ENCODE measurements at regions of chr3 and their contacts with region 1.

Region 1: GRCh38 chr3:148943506-148944205 is 47.7 kb upstream of the GYG1 start:
- DNase-seq: peak; percentile 77
- H3K4me3 ChIP-seq: no peak overlapping the region
- H3K27me3 ChIP-seq: no peaks in the 10 kb centered on the region
- CTCF ChIP-seq: peak; percentile 62

Region 2: DNA sequence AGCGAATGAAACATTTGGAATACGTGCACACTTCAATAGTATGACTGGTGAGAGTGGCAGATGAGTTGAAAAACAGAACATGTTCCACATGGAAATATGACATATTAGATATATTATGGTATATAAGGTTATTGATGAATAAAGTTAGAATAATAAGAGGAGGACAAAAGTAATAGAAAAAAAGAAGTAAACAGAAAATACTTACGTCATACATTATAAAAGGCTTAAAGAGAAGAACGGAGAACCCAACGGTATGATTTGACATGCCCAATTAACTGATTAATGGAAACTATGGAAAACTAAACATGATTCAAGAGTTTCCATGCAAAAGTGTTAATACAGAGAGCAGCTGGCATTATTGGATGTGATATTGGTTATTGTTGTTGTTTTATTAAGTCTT is 834.7 kb before region 1 on chr3:
- CTCF ChIA-PET with region 1: no interaction called
- POLR2A ChIA-PET with region 1: no interaction called
- DNase-seq: no peak
- H3K4me3 ChIP-seq: no peak overlapping the region
- H3K27me3 ChIP-seq: no peaks in the 10 kb centered on the region
- CTCF ChIP-seq: no peak

Region 3: DNA sequence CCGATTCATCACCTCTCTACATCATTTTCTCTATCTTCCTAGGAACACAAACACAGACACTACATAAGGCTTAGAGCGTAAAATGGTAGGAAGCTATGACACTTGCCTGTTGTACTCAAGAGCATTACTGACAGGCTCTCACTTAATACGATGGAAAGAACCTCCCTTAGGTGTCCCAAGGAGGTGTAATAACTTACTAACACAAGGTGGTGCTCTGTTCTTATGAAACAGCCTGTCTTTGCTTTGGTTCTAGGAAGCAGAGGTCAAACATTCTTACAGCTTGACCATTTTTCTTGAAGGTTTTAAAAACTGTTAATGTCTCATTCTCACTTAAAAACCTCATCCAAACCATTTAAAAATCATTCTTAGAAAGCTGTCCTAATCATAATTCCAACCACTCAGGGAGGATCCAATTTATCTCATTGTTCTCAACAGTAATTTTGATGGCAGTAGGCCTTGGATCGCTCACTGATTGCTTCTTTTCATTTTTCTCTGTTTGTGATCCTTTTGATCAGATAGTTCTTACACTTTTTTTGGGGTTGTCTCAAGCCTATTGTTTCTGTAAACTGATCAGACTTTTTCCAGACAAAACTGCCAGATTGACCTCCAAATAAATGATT is 563.8 kb before region 1 on chr3:
- CTCF ChIA-PET with region 1: interaction called, 12 read pairs
- POLR2A ChIA-PET with region 1: no interaction called
- DNase-seq: no peak
- H3K4me3 ChIP-seq: no peak overlapping the region
- H3K27me3 ChIP-seq: no peaks in the 10 kb centered on the region
- CTCF ChIP-seq: peak; percentile 46

Region 4: GRCh38 chr3:148727247-148727646 is 216.4 kb before region 1 on chr3:
- CTCF ChIA-PET with region 1: interaction called, 20 read pairs
- POLR2A ChIA-PET with region 1: no interaction called
- DNase-seq: no peak
- H3K4me3 ChIP-seq: no peak overlapping the region
- H3K27me3 ChIP-seq: no peaks in the 10 kb centered on the region; the same call in 1 of the 2 replicates
- CTCF ChIP-seq: peak; percentile 42

Region 5: DNA sequence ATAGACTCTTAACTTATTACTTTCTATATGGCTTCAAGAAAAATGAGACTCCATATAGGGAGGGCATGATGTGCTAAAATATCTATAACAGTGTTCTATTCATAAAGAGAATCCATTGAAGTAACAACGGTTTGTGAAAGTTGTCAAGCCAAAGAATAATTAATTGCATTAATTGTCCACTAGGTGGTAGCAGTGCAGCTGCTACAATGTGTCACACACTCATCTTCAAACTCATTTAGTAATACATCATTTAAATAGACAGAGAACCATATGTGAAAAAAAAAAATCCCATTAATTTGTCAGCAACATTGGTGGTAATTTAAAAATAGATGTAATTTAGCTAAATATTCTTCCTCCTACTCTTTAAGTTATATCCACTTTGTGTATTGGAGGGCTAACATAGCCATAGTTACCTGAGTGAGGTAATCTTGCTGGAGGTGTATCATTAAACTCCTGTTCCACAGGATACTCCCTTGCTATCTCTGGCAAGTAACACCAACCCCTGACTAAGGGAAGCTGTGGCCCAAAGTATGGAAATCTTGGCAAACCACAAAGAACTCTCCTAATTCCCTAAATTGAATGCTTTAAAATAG is 82.3 kb before region 1 on chr3:
- CTCF ChIA-PET with region 1: interaction called, 238 read pairs
- POLR2A ChIA-PET with region 1: no interaction called
- DNase-seq: no peak
- H3K4me3 ChIP-seq: no peak overlapping the region
- H3K27me3 ChIP-seq: no peaks in the 10 kb centered on the region; the same call in 1 of the 2 replicates
- CTCF ChIP-seq: peak; percentile 53

Region 6: DNA sequence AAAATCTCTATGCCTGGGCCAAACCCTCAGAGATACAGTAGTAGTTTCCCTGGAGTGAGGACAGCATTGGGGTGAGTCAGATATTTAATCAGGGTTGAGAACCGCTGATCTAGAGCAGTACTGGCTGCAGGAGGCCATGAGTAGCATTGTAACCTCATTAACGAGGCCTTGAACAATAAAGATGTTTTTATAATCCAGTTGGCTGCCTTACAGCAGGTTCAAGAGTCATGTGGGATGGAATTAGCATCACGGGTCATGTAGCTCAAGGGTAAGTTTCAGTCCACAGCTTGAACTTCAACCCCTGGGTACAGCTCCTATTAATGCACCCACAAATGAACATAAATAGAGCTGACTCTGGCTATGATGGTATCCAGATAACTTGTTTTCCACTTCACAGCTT is 190.9 kb after region 1 on chr3:
- CTCF ChIA-PET with region 1: no interaction called
- POLR2A ChIA-PET with region 1: no interaction called
- DNase-seq: no peak
- H3K4me3 ChIP-seq: no peak overlapping the region
- H3K27me3 ChIP-seq: no peaks in the 10 kb centered on the region
- CTCF ChIP-seq: no peak

Measured in BJ (cell line).